ENCODE measurements at regions of chrX and their contacts with region 1.

Region 1: GRCh38 chrX:94676285-94676684 is 1002.3 kb downstream of the FAM133A start:
- DNase-seq: no peak
- ATAC-seq: no peak
- H3K4me3 ChIP-seq: no peak overlapping the region
- H3K27ac ChIP-seq: no peak overlapping the region
- H3K4me1 ChIP-seq: no peaks in the 10 kb centered on the region
- H3K27me3 ChIP-seq: no peaks in the 10 kb centered on the region
- CTCF ChIP-seq: no peak
- POLR2A ChIP-seq: no peak

Region 2: GRCh38 chrX:94633237-94633636 is 43.0 kb before region 1 on chrX:
- intact Hi-C with region 1: no loop called
- DNase-seq: no peak
- ATAC-seq: no peak
- H3K4me3 ChIP-seq: no peak overlapping the region
- H3K27ac ChIP-seq: no peak overlapping the region
- H3K4me1 ChIP-seq: no peaks in the 10 kb centered on the region
- H3K27me3 ChIP-seq: no peaks in the 10 kb centered on the region
- CTCF ChIP-seq: no peak
- POLR2A ChIP-seq: no peak

Region 3: DNA sequence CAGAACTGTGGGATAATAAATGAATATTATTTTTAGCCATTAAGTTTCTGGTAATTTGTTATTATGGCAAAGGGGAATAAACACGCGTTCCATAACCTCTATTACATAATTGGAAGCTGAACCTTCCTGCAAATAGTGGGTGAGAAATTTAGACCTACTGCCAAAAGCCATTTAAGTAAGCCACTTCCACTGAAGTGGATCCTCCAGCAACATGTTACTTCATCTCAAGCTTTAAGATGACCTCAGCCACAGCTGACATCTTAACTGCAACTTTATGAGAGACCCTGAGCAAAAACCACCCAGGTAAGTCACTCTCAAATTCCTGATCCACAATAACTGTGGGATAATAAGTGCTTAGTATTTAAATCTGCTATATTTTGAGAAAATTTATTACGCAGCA is 46.3 kb after region 1 on chrX:
- intact Hi-C with region 1: loop called in 1 of 10 experiments (anchors 5 kb)
- DNase-seq: no peak
- ATAC-seq: no peak
- H3K4me3 ChIP-seq: no peak overlapping the region
- H3K27ac ChIP-seq: no peak overlapping the region
- H3K4me1 ChIP-seq: no peaks in the 10 kb centered on the region
- H3K27me3 ChIP-seq: peaks cover 0 to 14% (median 0%) of the 10 kb centered on the region in 9 donors
- CTCF ChIP-seq: no peak
- POLR2A ChIP-seq: no peak

Measured in heart left ventricle (tissue), 16 donors.